PC-3 (cell line): ENCODE measurements at regions of chr19 and their contacts with region 1.

Region 1: GRCh38 chr19:46404055-46404752 is 9.2 kb downstream of the CCDC8 start:
- DNase-seq: peak; percentile 37
- ATAC-seq: peak; percentile 66
- H3K4me3 ChIP-seq: peak overlapping the region; percentile 58
- H3K27ac ChIP-seq: no peak overlapping the region
- H3K4me1 ChIP-seq: 0 out of 2 replicates have a peak, but pooled peaks cover 4% of the 10 kb centered on the region
- H3K27me3 ChIP-seq: no peaks in the 10 kb centered on the region
- CTCF ChIP-seq: peak; percentile 35; the same call in 1 of the 2 replicates

Region 2: GRCh38 chr19:46442808-46443450 is 38.7 kb after region 1 on chr19:
- CTCF ChIA-PET with region 1: no interaction called
- POLR2A ChIA-PET with region 1: no interaction called
- intact Hi-C with region 1: no loop called
- DNase-seq: peak; percentile 85
- ATAC-seq: peak; percentile 72
- H3K4me3 ChIP-seq: no peak overlapping the region
- H3K27ac ChIP-seq: no peak overlapping the region
- H3K4me1 ChIP-seq: peaks cover 6% of the 10 kb centered on the region; the same call in 1 of the 2 replicates
- H3K27me3 ChIP-seq: no peaks in the 10 kb centered on the region
- CTCF ChIP-seq: no peak

Region 3: DNA sequence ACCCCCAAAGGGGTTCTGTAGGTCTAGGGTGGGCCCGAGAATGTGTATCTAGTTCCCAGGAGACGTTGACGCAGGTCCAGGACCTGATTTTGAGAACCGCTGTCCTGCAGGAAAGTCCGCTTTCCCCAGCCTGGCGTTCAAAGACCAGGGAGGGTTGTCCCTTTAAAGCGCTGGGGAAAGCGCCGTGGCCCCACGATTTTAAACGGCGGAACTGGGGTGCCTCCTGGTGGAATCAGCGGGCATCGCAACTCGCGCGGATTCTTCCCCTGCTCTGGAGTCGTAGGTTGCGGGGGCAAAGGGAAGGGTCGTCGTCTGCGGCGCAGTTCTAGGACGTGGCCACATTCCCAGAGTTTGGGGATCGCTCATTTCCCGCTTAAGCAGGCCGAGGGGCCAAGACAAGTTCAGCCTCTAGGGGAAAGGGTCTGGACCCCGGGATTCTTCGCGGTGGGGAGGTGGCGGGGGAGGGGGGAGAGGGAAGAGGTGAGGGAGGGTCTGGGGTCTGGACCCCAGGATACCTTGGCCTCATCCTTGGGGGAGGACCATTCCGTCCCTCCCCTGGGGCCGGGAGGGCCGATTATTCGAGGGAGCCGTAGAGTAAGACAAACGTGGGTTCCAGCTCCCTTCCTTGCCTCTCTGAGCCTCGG is 83.7 kb after region 1 on chr19:
- CTCF ChIA-PET with region 1: interaction called, 3 read pairs
- POLR2A ChIA-PET with region 1: no interaction called
- intact Hi-C with region 1: loop called (anchors 1 kb)
- DNase-seq: peak; percentile 69
- ATAC-seq: peak; percentile 84
- H3K4me3 ChIP-seq: peak overlapping the region; percentile 52; the same call in 1 of the 2 replicates
- H3K27ac ChIP-seq: no peak overlapping the region
- H3K4me1 ChIP-seq: no peaks in the 10 kb centered on the region; the same call in 1 of the 2 replicates
- H3K27me3 ChIP-seq: no peaks in the 10 kb centered on the region
- CTCF ChIP-seq: peak; percentile 77

Region 4: DNA sequence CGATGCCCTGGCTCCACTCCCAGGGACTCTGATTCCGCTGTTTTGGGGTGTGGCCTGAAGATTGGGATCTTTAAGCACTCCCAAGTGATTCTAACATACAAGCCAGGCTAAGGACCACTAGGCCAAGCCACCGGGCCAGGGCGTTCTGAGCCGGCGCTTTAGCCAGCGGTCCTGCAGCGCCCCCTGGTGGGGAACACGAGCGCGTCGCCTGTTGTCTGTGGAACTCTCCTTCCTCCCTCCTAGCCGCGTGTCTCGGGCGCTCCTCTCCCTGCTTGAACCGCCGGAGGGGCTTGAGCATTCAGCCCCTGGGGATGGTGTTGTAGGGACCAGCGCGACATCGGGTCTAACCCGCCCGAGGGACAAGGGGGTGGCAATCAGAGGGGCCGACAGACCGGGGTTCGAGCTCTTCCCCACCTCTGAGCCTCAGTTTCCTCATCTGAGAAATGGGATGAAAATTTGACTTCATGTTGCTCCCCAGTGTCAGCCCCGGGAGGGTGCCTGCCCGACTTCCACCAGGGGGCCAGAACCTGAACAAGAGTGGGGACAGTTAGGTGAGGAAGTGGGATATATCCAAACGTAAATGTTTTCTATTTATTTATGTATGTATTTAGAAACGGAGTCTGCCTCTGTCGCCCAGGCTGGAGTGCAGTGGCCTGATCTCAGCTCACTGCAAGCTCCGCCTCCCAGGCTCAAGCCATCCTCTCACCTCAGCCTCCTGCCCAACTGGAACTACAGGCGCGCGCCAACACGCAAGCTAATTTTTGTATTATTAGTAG is 109.4 kb after region 1 on chr19:
- CTCF ChIA-PET with region 1: no interaction called
- POLR2A ChIA-PET with region 1: no interaction called
- intact Hi-C with region 1: loop called (anchors 10 kb)
- DNase-seq: peak; percentile 68
- ATAC-seq: peak; percentile 85
- H3K4me3 ChIP-seq: no peak overlapping the region
- H3K27ac ChIP-seq: no peak overlapping the region
- H3K4me1 ChIP-seq: no peaks in the 10 kb centered on the region
- H3K27me3 ChIP-seq: no peaks in the 10 kb centered on the region
- CTCF ChIP-seq: peak; percentile 83

Region 5: DNA sequence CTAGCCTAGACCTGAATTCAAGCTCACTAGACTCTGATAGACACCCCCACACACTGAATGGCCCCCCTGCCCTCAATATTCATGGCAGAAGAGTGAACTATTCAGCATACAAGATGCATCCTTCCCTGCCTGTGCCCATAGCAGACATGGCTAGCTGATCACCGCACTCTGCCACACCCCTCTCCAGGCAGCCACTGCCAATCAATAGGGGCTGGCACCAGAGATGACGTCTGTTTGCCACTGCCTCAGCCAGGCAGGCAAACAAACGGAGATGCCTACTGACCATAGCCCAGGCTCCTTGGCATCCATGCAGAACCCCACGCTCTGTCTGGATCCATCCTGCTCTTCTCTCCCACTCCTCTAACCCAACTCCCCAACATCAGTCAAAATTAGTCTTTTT is 601.7 kb after region 1 on chr19:
- CTCF ChIA-PET with region 1: no interaction called
- POLR2A ChIA-PET with region 1: no interaction called
- intact Hi-C with region 1: no loop called
- DNase-seq: peak; percentile 26
- ATAC-seq: peak; percentile 54; the same call in 1 of the 2 replicates
- H3K4me3 ChIP-seq: no peak overlapping the region
- H3K27ac ChIP-seq: no peak overlapping the region
- H3K4me1 ChIP-seq: no peaks in the 10 kb centered on the region
- H3K27me3 ChIP-seq: no peaks in the 10 kb centered on the region
- CTCF ChIP-seq: no peak